ENCODE measurements at regions of chr10 and their contacts with region 1.

Region 1: DNA sequence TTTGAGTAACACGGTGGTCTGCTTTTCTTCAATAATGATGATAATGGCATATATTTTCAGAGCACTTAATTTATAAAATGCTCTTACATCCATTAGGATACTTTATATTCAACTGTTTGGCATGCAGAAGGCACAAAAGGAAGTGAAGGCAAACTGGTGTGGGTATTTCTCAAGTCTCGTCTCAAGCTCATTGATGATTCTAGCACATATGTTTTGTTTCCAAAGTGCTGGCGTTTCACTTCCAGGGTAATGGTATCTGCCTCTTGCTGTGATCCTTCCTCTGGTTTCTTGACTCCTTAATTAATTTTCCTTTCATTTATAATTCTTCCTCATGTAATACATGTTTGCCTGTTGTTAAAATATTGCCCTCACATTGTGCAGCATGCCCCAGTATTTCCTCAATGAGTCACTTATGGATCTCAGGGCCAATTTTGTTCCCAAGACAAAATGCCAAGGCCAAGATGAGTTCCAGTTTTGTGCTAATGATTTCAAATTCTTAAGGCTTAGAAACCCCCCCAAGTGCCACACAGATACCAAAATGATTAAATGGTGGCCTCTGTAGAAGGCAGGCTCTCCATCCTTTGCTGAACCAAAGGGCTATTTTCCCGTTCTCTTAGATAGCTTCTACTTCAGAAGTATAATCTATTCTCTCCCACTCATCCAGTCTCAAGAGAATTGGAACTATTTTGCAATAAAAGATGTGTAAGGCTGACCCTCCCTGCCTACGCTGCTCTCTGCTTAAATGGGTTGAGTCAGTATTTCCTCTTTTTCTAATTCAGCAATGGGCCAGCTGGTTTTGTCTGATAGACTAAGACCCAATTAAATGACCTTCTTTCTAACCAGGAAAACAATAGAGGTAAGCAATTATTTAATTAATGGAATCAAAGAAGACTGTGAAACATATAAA is 171.2 kb downstream of the ZNF365 start:
- H3K4me3 Mint-ChIP-seq: peak overlapping the region; percentile 45
- H3K27ac Mint-ChIP-seq: peak overlapping the region; percentile 87
- H3K4me1 Mint-ChIP-seq: peaks cover 68% of the 10 kb centered on the region
- H3K27me3 Mint-ChIP-seq: no peaks in the 10 kb centered on the region

Region 2: GRCh38 chr10:62456611-62457101 is 88.8 kb before region 1 on chr10:
- intact Hi-C with region 1: loop called (anchors 5 kb)
- H3K4me3 Mint-ChIP-seq: no peak overlapping the region
- H3K27ac Mint-ChIP-seq: peak overlapping the region; percentile 52
- H3K4me1 Mint-ChIP-seq: peaks cover 31% of the 10 kb centered on the region
- H3K27me3 Mint-ChIP-seq: peaks cover 4% of the 10 kb centered on the region

Region 3: GRCh38 chr10:62502995-62503613 is 42.3 kb before region 1 on chr10:
- intact Hi-C with region 1: loop called (anchors 5 kb)
- H3K4me3 Mint-ChIP-seq: no peak overlapping the region
- H3K27ac Mint-ChIP-seq: peak overlapping the region; percentile 54
- H3K4me1 Mint-ChIP-seq: peaks cover 52% of the 10 kb centered on the region
- H3K27me3 Mint-ChIP-seq: no peaks in the 10 kb centered on the region

Region 4: DNA sequence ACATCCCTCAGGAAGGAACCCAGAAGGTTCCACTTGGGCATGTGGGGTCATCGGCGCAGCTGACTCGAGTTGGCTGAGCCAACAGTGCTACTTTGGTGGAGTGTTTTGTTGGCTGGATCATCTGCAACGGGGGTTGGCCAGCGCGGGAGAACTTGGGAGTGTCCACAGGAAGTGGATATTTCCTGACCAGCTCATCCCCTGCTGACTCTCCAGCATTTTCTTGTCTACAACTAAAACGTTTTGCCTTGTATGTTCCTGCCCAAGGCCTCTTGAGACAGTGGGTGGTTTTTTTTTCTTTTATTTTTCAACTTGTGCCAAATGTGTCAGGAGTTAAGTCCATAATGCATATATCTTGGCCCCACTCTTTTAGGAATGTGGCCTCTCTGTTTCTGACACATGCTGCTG is 37.4 kb after region 1 on chr10:
- intact Hi-C with region 1: loop called (anchors 5 kb)
- H3K4me3 Mint-ChIP-seq: peak overlapping the region; percentile 13
- H3K27ac Mint-ChIP-seq: peak overlapping the region; percentile 80
- H3K4me1 Mint-ChIP-seq: peaks cover 62% of the 10 kb centered on the region
- H3K27me3 Mint-ChIP-seq: peaks cover 2% of the 10 kb centered on the region

Measured in dendritic cell treated with granulocyte-macrophage colony-stimulating factor and Interleukin-4, amounts not matched to agents 40 ng/mL and 50 ng/mL, for 4 days (primary cell).